ENCODE measurements at regions of chr9 and their contacts with region 1.

Region 1: DNA sequence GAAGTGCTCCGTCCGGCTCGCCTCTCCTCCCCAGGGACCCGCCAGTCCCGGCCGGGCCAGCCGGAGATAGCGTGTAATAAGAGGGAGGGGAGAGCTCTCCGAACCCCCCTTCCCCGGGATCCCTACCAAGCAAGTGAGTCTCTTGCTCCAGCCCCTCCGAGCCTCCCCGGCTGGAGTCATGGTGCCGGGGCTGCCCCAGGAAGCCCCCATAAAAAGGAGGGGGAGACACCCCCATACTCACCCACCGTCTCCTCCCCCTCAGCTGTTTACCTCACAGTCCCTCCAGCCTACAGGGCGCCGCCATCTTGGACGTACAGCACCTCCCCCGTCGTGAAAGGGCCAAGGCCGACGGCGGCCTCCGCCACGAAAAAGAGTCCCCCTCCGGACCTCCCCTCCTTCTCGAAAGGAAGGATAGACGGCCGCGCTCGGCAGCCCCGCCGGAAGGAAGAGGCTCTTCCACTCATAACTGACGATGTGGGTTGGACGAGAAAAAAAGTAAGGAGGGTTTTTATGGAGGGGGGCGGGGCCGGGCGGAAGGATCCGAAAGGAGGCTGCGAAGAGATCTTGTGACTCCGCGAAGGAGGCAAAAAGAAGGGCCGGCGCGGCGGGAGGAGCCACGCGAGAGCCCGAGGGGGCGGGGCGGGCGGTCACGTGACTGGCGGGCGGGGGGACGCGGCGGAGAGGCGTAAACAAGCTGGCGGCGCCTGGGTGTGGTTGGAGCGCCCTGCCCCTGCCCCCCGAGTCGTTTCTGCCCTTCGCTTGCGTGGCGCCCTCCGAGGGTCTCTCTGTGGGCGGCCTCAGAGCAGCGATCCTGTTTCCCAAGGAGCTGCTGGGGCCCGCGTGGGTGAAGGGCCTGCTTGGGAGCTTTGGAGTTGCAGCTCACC is at the start of gene TSC1:
- DNase-seq: peak; percentile 99
- ATAC-seq: peak; percentile 91
- H3K4me3 Mint-ChIP-seq: peak within 1 kb of the TSS; percentile 81
- H3K27ac Mint-ChIP-seq: peak within 1 kb of the TSS; percentile 99
- H3K4me1 Mint-ChIP-seq: peaks cover 31% of the 10 kb centered on the region
- H3K27me3 Mint-ChIP-seq: no peaks in the 10 kb centered on the region
- total RNA-seq, gene TSC1: 23.9 to 28.6 TPM

Region 2: GRCh38 chr9:132406554-132407122 is 537.9 kb before region 1 on chr9 and contains the start of gene TTF1:
- CTCF ChIA-PET with region 1: no interaction called
- POLR2A ChIA-PET with region 1: no interaction called
- intact Hi-C with region 1: loop called in 1 of 2 experiments (anchors 1 kb)
- DNase-seq: peak; percentile 97
- ATAC-seq: peak; percentile 79
- H3K4me3 Mint-ChIP-seq: peak within 1 kb of the TSS; percentile 96
- H3K27ac Mint-ChIP-seq: peak within 1 kb of the TSS; percentile 91
- H3K4me1 Mint-ChIP-seq: peaks cover 56% of the 10 kb centered on the region
- H3K27me3 Mint-ChIP-seq: peaks cover 9% of the 10 kb centered on the region
- total RNA-seq, gene TTF1: 31.9 to 33.4 TPM

Region 3: GRCh38 chr9:132877824-132878694 is 66.5 kb before region 1 on chr9 and contains the start of gene AK8:
- CTCF ChIA-PET with region 1: no interaction called
- POLR2A ChIA-PET with region 1: no interaction called
- intact Hi-C with region 1: loop called in 1 of 2 experiments (anchors 1 kb)
- DNase-seq: peak; percentile 86
- ATAC-seq: peak; percentile 76
- H3K4me3 Mint-ChIP-seq: peak within 1 kb of the TSS; percentile 73
- H3K27ac Mint-ChIP-seq: peak within 1 kb of the TSS; percentile 13
- H3K4me1 Mint-ChIP-seq: peaks cover 21% of the 10 kb centered on the region
- H3K27me3 Mint-ChIP-seq: no peaks in the 10 kb centered on the region
- total RNA-seq, gene AK8: 0.21 TPM in 1 of 2 experiments, not detected in the other

Region 4: GRCh38 chr9:133030317-133031129 is 86.0 kb after region 1 on chr9 and contains the start of gene GTF3C5:
- CTCF ChIA-PET with region 1: interaction called, 4 read pairs
- POLR2A ChIA-PET with region 1: no interaction called
- intact Hi-C with region 1: loop called in 1 of 2 experiments (anchors 1 kb)
- DNase-seq: peak; percentile 95
- ATAC-seq: peak; percentile 98
- H3K4me3 Mint-ChIP-seq: peak within 1 kb of the TSS; percentile 94
- H3K27ac Mint-ChIP-seq: peak within 1 kb of the TSS; percentile 95
- H3K4me1 Mint-ChIP-seq: peaks cover 41% of the 10 kb centered on the region
- H3K27me3 Mint-ChIP-seq: no peaks in the 10 kb centered on the region
- total RNA-seq, gene GTF3C5: 81.3 to 84.5 TPM

Region 5: DNA sequence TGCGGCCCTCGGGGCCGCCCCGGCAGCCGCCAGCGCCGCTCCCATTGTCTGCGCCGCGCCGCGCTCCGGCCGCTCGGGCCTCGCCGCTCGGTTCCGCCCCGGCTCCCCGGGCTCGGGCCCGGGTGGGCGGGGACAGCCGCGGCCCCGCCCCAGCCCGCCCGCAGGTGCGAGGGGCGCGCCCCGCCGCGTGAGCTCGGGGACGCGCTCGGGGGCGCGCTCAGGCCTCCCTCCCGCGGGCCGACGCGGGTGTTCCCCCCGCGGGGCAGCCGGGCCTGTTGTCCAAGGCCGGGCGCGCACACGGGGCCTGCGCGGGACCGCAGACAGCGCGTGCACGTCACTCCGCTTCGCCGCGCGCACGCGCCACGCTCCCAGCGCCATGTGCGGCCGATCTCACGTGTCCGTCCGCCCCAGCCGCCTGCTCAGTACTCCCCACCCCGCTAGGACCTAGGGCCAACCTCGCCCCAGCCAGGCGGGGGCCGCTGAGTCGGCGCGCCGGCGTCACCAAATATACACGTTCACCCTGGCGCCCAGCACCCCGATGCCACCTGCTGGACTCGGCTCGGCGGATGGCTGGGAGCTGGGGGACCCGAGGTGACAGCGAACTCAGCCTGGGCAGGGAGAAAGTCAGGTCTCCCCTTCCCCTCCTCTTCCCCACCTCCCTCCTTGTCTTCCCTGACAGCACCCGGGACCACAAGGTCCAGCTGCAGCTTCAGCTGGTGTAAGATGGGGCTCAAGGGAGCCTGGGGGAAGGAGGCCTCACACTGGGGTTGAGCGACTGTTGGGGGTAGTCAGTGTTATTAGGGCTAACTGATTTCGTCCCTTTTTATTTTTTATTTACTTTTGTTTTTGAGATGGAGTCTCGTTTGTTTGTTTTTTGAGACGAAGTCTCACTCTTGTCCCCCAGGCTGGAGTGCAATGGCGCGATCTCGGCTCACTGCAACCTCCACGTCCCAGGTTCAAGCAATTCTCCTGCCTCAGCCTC is 204.9 kb after region 1 on chr9:
- CTCF ChIA-PET with region 1: no interaction called
- POLR2A ChIA-PET with region 1: no interaction called
- intact Hi-C with region 1: loop called in 1 of 2 experiments (anchors 1 kb)
- DNase-seq: peak; percentile 92
- ATAC-seq: peak; percentile 68
- H3K4me3 Mint-ChIP-seq: peak overlapping the region; percentile 63
- H3K27ac Mint-ChIP-seq: peak overlapping the region; percentile 67
- H3K4me1 Mint-ChIP-seq: peaks cover 27% of the 10 kb centered on the region
- H3K27me3 Mint-ChIP-seq: no peaks in the 10 kb centered on the region